ENCODE measurements at regions of chr11 and their contacts with region 1.

Region 1: DNA sequence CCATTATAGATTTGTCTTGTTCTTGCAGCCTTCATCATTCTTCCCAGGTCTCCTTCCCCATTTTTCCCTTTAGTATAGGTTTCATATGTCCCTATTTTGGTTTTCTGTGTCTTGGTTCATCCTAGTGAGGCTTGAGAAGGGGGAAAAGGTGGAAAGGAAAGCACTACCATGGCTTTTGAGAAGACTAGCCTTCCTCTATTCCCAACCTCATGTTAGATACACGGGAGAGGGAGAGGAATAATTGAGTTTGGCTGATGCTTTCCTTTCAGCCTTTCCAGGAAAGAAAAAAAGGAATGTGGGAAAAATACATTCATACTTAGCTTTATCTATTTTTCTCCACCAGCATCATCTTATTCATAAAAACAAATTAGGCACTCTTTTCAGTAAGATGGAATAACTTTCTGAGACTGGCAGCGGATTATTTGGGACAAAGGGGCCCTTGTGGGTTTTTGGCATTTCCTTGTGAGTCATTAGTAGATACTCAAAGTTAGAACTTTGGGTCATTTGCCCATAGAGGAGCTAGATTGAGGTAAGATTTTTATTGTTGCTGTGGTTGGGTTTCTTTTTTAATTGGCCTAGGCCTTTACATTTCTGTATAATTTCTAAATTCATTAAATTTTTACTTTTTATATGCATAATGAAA is 23.8 kb downstream of the CAPRIN1 start:
- DNase-seq: no peak
- ATAC-seq: no peak
- H3K4me3 ChIP-seq: no peak overlapping the region
- H3K4me3 Mint-ChIP-seq: no peak overlapping the region
- H3K27ac ChIP-seq: peak overlapping the region; percentile 1 to 13
- H3K27ac Mint-ChIP-seq: peak overlapping the region; percentile 67
- H3K4me1 ChIP-seq: peaks cover 14% of the 10 kb centered on the region
- H3K4me1 Mint-ChIP-seq: peaks cover 57% of the 10 kb centered on the region
- H3K27me3 ChIP-seq: no peaks in the 10 kb centered on the region
- H3K27me3 Mint-ChIP-seq: no peaks in the 10 kb centered on the region
- CTCF ChIP-seq: no peak

Region 2: DNA sequence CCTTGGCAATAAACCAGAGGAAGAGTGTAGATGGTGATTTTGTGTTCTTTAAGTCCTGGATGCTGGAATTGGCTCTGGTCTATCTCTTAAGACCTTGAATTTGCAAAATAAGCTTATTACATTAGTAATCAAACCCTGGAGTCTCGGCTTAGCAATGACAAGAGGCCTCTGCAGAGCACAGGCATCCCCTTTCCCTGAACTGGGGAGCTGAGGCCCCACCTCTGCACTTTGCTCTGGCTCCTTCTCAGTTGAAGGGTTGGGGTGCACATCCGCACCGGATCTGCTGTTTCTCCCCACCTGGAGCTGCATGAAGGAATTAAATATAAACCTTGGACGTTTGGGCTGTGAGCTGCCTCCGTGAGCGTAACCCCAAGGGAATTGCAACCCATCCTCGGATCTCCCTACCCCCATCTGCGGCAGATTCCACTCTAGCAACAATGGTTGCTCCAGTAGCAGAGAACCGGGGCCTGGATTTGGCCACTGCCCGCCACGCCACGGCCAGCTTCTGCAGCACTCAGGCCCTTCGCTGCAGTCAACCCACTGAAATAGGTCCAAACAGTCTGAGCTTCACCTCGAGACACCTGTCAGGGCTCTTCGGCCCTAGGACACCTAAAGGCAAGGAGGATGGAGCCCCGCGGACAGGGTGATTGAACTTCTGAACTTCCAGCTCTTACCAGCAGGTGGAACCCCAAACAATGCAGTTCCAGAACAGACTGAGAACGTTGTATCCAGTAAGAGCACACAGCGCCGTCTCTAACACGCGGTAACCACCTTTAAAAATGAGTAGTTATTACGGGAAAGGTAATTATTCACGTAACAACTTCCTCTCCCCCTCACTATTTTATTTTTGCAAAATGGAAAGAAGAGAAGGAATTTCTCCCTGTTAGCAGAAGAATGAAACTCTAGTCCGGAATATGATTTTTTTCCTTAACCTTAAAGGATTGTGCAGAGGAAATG is 78.5 kb before region 1 on chr11:
- CTCF ChIA-PET with region 1: interaction called, 4 read pairs
- POLR2A ChIA-PET with region 1: no interaction called
- intact Hi-C with region 1: loop called in 1 of 2 experiments (anchors 5 kb)
- DNase-seq: peak; percentile 53 to 85 (median 66)
- ATAC-seq: peak; percentile 100
- H3K4me3 ChIP-seq: no peak overlapping the region
- H3K4me3 Mint-ChIP-seq: peak overlapping the region; percentile 55
- H3K27ac ChIP-seq: no peak overlapping the region
- H3K27ac Mint-ChIP-seq: no peak overlapping the region
- H3K4me1 ChIP-seq: peaks cover 7% of the 10 kb centered on the region
- H3K4me1 Mint-ChIP-seq: peaks cover 7% of the 10 kb centered on the region
- H3K27me3 ChIP-seq: no peaks in the 10 kb centered on the region
- H3K27me3 Mint-ChIP-seq: peaks cover 23% of the 10 kb centered on the region
- CTCF ChIP-seq: peak; percentile 76

Region 3: GRCh38 chr11:34037016-34037415 is 38.3 kb before region 1 on chr11:
- CTCF ChIA-PET with region 1: no interaction called
- POLR2A ChIA-PET with region 1: no interaction called
- intact Hi-C with region 1: no loop called
- DNase-seq: no peak
- ATAC-seq: no peak
- H3K4me3 ChIP-seq: no peak overlapping the region
- H3K4me3 Mint-ChIP-seq: no peak overlapping the region
- H3K27ac ChIP-seq: no peak overlapping the region
- H3K27ac Mint-ChIP-seq: no peak overlapping the region
- H3K4me1 ChIP-seq: no peaks in the 10 kb centered on the region
- H3K4me1 Mint-ChIP-seq: no peaks in the 10 kb centered on the region
- H3K27me3 ChIP-seq: no peaks in the 10 kb centered on the region
- H3K27me3 Mint-ChIP-seq: no peaks in the 10 kb centered on the region
- CTCF ChIP-seq: no peak

Region 4: DNA sequence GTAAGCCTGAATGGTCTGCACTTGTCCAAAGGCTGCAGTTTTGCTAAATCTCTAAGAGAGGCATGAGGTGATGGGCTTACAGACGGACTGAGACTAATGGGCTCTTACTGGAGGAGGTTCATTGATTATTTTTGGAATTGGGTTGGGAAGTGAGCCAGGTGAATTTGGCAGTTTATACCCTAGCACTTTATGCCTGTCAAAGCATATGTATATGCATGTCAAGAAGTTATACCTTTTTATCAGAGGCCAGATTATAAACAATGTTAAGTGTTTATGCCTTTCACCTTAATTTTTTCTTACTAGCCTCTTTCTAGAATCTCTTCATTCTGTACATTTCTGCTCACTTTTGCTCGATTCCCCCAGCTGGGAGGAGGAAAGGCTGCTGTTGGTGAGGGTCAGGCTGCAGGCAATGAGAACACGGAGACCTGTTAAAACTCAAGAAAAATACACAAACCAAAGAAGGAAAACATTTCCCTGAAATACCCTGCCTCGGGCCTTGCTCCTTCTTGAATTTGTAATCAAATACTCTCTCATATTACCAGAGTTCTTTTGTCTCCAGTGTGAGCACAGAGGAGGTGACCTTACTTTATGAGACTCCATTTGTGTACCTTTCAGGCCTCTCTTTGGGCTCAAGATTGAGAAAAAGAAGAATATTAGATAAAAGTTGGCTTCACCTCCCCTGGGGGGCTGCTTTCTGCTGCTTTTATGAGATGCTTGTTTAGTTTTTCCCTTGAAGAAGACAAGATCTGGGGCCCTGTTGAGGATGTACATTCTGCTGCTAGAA is 49.8 kb after region 1 on chr11:
- CTCF ChIA-PET with region 1: no interaction called
- POLR2A ChIA-PET with region 1: no interaction called
- intact Hi-C with region 1: no loop called
- DNase-seq: no peak
- ATAC-seq: no peak
- H3K4me3 ChIP-seq: no peak overlapping the region
- H3K4me3 Mint-ChIP-seq: no peak overlapping the region
- H3K27ac ChIP-seq: no peak overlapping the region
- H3K27ac Mint-ChIP-seq: no peak overlapping the region
- H3K4me1 ChIP-seq: no peaks in the 10 kb centered on the region
- H3K4me1 Mint-ChIP-seq: no peaks in the 10 kb centered on the region
- H3K27me3 ChIP-seq: no peaks in the 10 kb centered on the region
- H3K27me3 Mint-ChIP-seq: no peaks in the 10 kb centered on the region
- CTCF ChIP-seq: no peak